GM23248 (cell line): ENCODE measurements at regions of chr10 and their contacts with region 1.

Region 1: GRCh38 chr10:92082583-92083280 is 159.2 kb downstream of the BTAF1 start:
- DNase-seq: no peak
- H3K4me3 ChIP-seq: no peak overlapping the region
- H3K27ac ChIP-seq: no peak overlapping the region
- H3K4me1 ChIP-seq: no peaks in the 10 kb centered on the region
- H3K27me3 ChIP-seq: no peaks in the 10 kb centered on the region

Region 2: DNA sequence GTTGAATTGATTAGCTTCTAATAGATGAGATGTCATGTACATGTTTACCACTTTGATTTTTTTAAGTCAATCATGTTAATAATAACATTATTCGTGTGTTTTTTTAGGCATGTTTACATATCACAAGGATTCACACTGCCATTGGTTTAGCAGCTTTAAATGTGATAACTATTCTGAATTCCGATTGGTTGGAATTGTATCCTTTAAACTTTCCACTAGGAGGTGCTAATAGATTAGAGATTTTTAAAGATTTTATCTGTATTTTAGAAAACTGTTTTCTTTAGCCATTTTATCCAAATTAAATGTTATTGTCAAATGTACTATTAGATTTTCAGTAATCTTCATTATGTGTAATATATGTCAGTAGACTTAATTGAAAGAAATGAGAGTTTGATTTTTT is 589.4 kb before region 1 on chr10:
- in situ Hi-C with region 1: no loop called
- DNase-seq: peak; percentile 79
- H3K4me3 ChIP-seq: no peak overlapping the region
- H3K27ac ChIP-seq: no peak overlapping the region
- H3K4me1 ChIP-seq: peaks cover 30% of the 10 kb centered on the region
- H3K27me3 ChIP-seq: no peaks in the 10 kb centered on the region

Region 3: GRCh38 chr10:92436611-92437010 is 353.9 kb after region 1 on chr10:
- in situ Hi-C with region 1: loop called (anchors 5 kb)
- DNase-seq: no peak
- H3K4me3 ChIP-seq: no peak overlapping the region
- H3K27ac ChIP-seq: no peak overlapping the region
- H3K4me1 ChIP-seq: no peaks in the 10 kb centered on the region
- H3K27me3 ChIP-seq: no peaks in the 10 kb centered on the region